Activated CD4-positive, alpha-beta memory T cell treated with anti-CD3 and anti-CD28 coated beads for 36 hours (primary cell): ENCODE measurements at regions of chr12 and their contacts with region 1.

Region 1: GRCh38 chr12:27014085-27014858 is at the start of gene TM7SF3:
- DNase-seq: peak; percentile 96
- H3K4me3 Mint-ChIP-seq: peak within 1 kb of the TSS; percentile 85
- H3K27ac Mint-ChIP-seq: peak within 1 kb of the TSS; percentile 89
- H3K4me1 Mint-ChIP-seq: peaks cover 46% of the 10 kb centered on the region
- H3K27me3 Mint-ChIP-seq: no peaks in the 10 kb centered on the region
- total RNA-seq, gene TM7SF3: 24.2 to 28.5 TPM

Region 2: GRCh38 chr12:26832822-26833742 is 181.2 kb before region 1 on chr12 and contains the start of gene ITPR2:
- CTCF ChIA-PET with region 1: interaction called, 18 read pairs
- POLR2A ChIA-PET with region 1: interaction called, 3 read pairs
- intact Hi-C with region 1: loop called (anchors 1 kb)
- DNase-seq: peak; percentile 96
- H3K4me3 Mint-ChIP-seq: peak within 1 kb of the TSS; percentile 99
- H3K27ac Mint-ChIP-seq: peak within 1 kb of the TSS; percentile 98
- H3K4me1 Mint-ChIP-seq: peaks cover 34% of the 10 kb centered on the region
- H3K27me3 Mint-ChIP-seq: no peaks in the 10 kb centered on the region
- total RNA-seq, gene ITPR2: 23.7 to 25.0 TPM

Region 3: DNA sequence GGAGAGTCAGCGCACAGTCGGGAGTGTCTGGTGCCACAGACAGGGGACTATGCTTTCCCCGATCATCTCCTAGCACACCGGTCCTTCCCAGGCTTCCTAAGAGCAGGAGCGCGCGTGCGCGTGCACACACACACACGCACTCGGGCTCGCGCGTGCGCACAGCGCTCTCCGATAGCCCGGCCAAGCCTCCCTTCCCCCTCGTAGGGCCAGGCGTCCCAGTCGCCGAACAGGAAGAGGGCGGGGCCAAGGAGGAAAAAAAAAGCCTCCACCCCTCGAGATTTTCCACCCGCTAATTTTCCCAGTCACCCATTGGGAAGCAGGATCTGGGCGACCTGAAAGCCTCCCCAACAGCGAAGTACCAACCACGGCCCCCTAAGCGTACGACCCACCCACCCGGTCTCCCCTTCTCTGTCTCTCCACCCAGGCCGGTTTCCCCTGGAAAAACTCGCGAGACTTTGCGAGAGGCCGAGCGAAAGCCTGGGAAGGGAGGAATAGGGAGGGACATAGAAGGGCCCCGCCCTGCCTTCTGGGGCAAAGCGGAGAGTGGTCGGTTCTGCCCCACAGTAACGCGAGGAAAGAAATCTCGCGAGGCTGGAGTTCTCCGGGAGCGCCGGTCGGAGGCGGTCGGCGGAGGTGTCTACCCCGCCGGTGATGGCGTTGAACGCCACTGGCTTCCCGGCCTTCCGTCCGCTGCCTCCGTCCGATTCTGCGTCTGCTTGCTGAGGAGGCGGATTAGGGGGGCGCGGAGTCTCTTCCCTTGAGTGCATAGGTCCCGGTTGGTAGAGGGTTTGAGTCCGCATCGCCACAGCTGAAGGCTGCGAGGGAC is 76.2 kb before region 1 on chr12 and contains the starts of genes FGFR1OP2 and INTS13:
- CTCF ChIA-PET with region 1: interaction called, 10 read pairs
- POLR2A ChIA-PET with region 1: interaction called, 4 read pairs
- intact Hi-C with region 1: loop called (anchors 1 kb)
- DNase-seq: peak; percentile 98
- H3K4me3 Mint-ChIP-seq: peak within 1 kb of the TSS; percentile 94
- H3K27ac Mint-ChIP-seq: peak within 1 kb of the TSS; percentile 98
- H3K4me1 Mint-ChIP-seq: peaks cover 48% of the 10 kb centered on the region
- H3K27me3 Mint-ChIP-seq: no peaks in the 10 kb centered on the region
- total RNA-seq, gene FGFR1OP2: 49.1 to 50.7 TPM
- total RNA-seq, gene INTS13: 54.5 to 54.8 TPM

Region 4: DNA sequence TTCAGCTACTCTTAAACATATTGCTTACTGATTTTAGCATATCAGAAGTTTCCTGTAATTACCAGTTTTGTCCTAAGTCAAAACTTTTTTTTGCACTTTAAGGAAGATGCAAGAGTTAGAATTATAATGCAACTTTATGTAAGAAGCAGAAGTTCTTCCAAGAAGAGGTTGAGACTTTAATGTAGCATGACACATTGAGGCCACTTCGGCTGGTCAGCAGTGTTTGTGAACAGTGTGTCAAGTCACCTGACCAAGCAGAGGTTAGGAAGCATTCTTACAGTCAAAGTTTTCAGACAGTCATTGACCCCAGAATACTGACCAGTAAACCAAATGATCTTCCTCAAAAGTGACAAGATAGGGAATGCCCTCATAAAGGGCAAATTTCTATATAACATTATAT is 60.8 kb before region 1 on chr12:
- CTCF ChIA-PET with region 1: no interaction called
- POLR2A ChIA-PET with region 1: no interaction called
- intact Hi-C with region 1: no loop called
- DNase-seq: no peak
- H3K4me3 Mint-ChIP-seq: no peak overlapping the region
- H3K27ac Mint-ChIP-seq: no peak overlapping the region
- H3K4me1 Mint-ChIP-seq: peaks cover 42% of the 10 kb centered on the region
- H3K27me3 Mint-ChIP-seq: no peaks in the 10 kb centered on the region

Region 5: GRCh38 chr12:27142101-27142721 is 127.9 kb after region 1 on chr12:
- CTCF ChIA-PET with region 1: interaction called, 16 read pairs
- POLR2A ChIA-PET with region 1: no interaction called
- intact Hi-C with region 1: loop called (anchors 1 kb)
- DNase-seq: peak; percentile 51
- H3K4me3 Mint-ChIP-seq: no peak overlapping the region
- H3K27ac Mint-ChIP-seq: no peak overlapping the region
- H3K4me1 Mint-ChIP-seq: peaks cover 6% of the 10 kb centered on the region
- H3K27me3 Mint-ChIP-seq: no peaks in the 10 kb centered on the region

Region 6: DNA sequence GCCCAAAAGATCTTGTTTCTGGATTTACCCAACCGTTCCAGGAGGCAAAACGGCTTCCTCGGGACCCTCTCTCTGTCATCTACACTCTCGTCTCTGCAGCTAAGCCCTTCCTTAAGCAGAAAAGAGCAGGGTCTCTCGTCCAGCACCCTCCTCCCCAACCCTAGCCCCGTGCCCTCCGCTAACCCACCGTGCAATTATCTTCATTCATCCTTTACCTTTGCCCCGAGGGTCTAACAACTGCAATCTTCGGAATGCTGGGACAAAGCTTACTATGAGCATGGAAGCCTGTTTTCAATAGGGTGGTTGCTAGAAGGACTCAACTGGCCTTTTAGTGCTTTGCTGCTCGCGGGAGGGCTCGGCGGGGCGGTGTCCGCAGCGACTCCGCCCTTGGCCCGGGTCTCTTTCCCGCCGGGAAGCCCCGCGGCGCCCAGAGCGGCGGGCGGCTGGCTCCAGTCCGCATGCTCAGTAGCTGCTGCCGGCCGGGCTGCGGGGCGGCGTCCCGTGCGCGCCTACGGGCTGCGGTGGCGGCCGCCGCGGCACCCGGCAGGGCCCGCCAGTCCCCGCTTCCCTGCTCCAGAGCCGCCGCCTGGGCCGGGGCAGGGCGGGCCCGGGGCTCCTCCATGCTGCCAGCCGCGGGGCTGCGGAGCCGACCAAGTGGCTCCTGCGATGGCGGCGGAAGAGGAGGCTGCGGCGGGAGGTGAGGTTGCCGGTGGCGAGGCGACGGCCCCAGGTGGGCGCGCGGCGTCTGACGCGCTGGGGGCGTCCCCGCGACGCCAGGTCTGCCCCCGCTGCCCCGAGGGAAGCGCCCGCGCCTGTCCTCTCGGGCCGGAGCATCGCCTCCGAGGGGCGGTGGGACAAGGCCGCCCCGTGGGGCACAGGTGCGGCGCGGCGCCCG is 318.4 kb after region 1 on chr12 and contains the start of gene BMAL2:
- CTCF ChIA-PET with region 1: interaction called, 6 read pairs
- POLR2A ChIA-PET with region 1: interaction called, 3 read pairs
- intact Hi-C with region 1: loop called (anchors 1 kb)
- DNase-seq: peak; percentile 54
- H3K4me3 Mint-ChIP-seq: peak within 1 kb of the TSS; percentile 91
- H3K27ac Mint-ChIP-seq: peak within 1 kb of the TSS; percentile 84
- H3K4me1 Mint-ChIP-seq: peaks cover 49% of the 10 kb centered on the region
- H3K27me3 Mint-ChIP-seq: peaks cover 31% of the 10 kb centered on the region
- total RNA-seq, gene BMAL2: 14.9 to 15.2 TPM

Region 7: DNA sequence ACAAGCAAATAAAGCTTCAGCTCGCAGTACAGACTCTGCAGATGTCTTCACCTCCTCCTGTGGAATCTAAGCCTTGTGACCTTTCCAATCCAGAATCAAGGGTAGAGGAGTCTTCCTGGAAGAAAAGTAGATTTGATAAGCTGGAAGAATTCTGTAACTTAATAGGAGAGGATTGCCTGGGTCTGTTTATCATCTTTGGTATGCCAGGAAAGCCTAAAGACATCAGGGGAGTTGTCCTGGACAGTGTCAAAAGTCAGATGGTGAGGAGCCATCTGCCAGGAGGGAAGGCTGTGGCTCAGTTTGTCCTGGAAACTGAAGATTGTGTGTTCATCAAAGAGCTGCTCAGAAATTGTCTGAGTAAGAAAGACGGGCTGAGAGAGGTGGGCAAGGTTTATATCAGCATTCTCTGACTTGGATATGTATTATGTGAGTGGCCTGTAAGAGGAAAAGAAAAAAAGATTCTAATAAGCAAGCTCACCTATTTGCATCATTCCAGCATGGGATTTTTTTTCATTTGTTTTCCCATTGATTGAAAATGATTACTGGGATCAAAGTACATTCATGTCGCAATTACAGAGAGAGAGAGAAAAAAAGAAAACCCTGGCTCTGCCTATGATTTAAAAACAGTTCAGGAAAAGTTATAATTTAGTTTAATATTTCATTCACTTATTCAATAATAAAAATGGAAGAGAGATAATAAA is 682.7 kb after region 1 on chr12:
- CTCF ChIA-PET with region 1: no interaction called
- POLR2A ChIA-PET with region 1: no interaction called
- intact Hi-C with region 1: no loop called
- DNase-seq: no peak
- H3K4me3 Mint-ChIP-seq: no peak overlapping the region
- H3K27ac Mint-ChIP-seq: no peak overlapping the region
- H3K4me1 Mint-ChIP-seq: no peaks in the 10 kb centered on the region
- H3K27me3 Mint-ChIP-seq: peaks cover 5% of the 10 kb centered on the region